HCT116 (cell line): ENCODE measurements at regions of chr12 and their contacts with region 1.

Region 1: GRCh38 chr12:96516472-96517430 is 27.4 kb downstream of the CFAP54 start:
- DNase-seq: peak; percentile 66
- ATAC-seq: peak; percentile 81
- H3K4me3 ChIP-seq: no peak overlapping the region
- H3K27ac ChIP-seq: no peak overlapping the region
- H3K4me1 ChIP-seq: peaks cover 0 to 5% of the 10 kb centered on the region in 2 experiments; a peak in 1 of 4 replicates
- H3K27me3 ChIP-seq: no peaks in the 10 kb centered on the region
- CTCF ChIP-seq: peak; percentile 29 to 80 (median 72); a peak in 5 of 6 replicates
- POLR2A ChIP-seq: no peak
- RAD21 ChIP-seq: peak; percentile 92

Region 2: DNA sequence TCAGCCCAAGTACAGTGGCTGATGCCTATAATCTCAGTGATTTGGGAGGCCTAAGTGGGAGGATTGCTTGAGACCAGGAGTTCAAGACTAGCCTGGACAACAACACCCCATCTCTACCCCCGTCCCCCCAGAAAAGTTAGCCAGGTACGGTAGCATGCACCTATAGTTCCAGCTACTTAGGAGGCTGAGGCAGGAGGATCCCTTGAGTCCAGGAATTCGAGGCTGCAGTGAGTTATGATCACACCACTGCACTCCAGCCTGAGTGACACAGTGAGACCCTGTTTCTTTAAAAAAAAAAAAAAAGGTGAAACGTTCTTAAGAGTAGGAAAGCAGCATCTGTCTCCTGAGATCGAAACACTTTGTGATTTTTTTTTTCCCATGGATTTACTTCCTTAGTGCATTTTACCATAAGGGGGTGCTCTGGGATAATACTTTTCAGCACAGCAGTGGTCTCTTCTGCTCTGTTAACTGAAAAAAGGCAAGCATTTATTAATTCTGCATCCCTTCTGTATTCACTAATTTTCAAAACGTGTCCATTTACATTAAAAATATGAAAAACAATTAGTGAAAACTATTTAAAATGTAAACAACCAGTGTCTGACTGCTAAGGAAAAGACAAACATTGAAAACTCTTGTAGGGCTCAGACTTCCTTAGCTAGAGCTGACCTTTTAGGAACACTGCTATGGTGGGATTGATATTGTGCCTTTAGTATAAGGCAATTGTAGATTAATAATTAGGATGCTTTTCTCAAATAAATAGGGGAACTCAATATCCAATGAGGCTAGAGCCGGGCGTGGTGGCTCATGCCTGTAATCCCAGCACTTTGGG is 934.3 kb before region 1 on chr12:
- CTCF ChIA-PET with region 1: interaction called, 4 read pairs
- POLR2A ChIA-PET with region 1: no interaction called
- RAD21 ChIA-PET with region 1: no interaction called
- intact Hi-C with region 1: loop called (anchors 5 kb)
- DNase-seq: peak; percentile 51
- ATAC-seq: peak; percentile 85
- H3K4me3 ChIP-seq: no peak overlapping the region
- H3K27ac ChIP-seq: no peak overlapping the region
- H3K4me1 ChIP-seq: no peaks in the 10 kb centered on the region
- H3K27me3 ChIP-seq: no peaks in the 10 kb centered on the region
- CTCF ChIP-seq: peak; percentile 43 to 72 (median 60)
- POLR2A ChIP-seq: no peak
- RAD21 ChIP-seq: peak; percentile 88

Region 3: GRCh38 chr12:95820102-95820703 is 696.5 kb before region 1 on chr12:
- CTCF ChIA-PET with region 1: no interaction called
- POLR2A ChIA-PET with region 1: no interaction called
- RAD21 ChIA-PET with region 1: no interaction called
- intact Hi-C with region 1: loop called (anchors 5 kb)
- DNase-seq: peak; percentile 41
- ATAC-seq: peak; percentile 72
- H3K4me3 ChIP-seq: no peak overlapping the region
- H3K27ac ChIP-seq: no peak overlapping the region
- H3K4me1 ChIP-seq: no peaks in the 10 kb centered on the region
- H3K27me3 ChIP-seq: no peaks in the 10 kb centered on the region
- CTCF ChIP-seq: peak; percentile 60 to 80 (median 72); a peak in 5 of 6 replicates
- POLR2A ChIP-seq: no peak
- RAD21 ChIP-seq: peak; percentile 67

Region 4: DNA sequence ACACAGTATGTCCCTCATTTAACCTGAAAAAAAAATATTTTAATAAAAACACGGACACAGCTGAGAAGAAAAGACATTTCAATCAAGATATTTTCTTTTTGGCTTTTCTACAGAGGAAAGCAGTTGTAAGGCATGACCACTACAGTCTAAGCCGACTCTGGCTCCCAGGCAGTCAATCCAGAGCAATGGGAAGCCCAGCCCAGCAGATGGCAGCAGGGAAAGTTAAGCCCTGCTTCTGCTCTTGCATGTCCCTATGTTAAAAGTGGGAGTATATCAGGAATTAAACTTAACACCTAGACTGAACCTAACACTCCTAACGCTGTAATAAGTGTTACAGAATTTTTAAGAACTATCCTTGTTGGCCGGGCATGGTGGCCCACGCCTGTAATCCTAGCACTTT is 501.1 kb before region 1 on chr12:
- CTCF ChIA-PET with region 1: interaction called, 4 read pairs
- POLR2A ChIA-PET with region 1: interaction called, 3 read pairs
- RAD21 ChIA-PET with region 1: no interaction called
- intact Hi-C with region 1: loop called (anchors 5 kb)
- DNase-seq: no peak
- ATAC-seq: peak; percentile 78
- H3K4me3 ChIP-seq: no peak overlapping the region
- H3K27ac ChIP-seq: no peak overlapping the region
- H3K4me1 ChIP-seq: no peaks in the 10 kb centered on the region
- H3K27me3 ChIP-seq: no peaks in the 10 kb centered on the region
- CTCF ChIP-seq: peak; percentile 24 to 50 (median 48); a peak in 5 of 6 replicates
- POLR2A ChIP-seq: no peak
- RAD21 ChIP-seq: peak; percentile 51; the same call in 1 of the 2 replicates

Region 5: GRCh38 chr12:96061864-96062453 is 454.8 kb before region 1 on chr12:
- CTCF ChIA-PET with region 1: interaction called, 8 read pairs
- POLR2A ChIA-PET with region 1: no interaction called
- RAD21 ChIA-PET with region 1: interaction called in 1 of 2 experiments, 3 read pairs
- intact Hi-C with region 1: loop called (anchors 1 kb)
- DNase-seq: peak; percentile 81
- ATAC-seq: peak; percentile 96
- H3K4me3 ChIP-seq: no peak overlapping the region
- H3K27ac ChIP-seq: no peak overlapping the region
- H3K4me1 ChIP-seq: no peaks in the 10 kb centered on the region
- H3K27me3 ChIP-seq: no peaks in the 10 kb centered on the region
- CTCF ChIP-seq: peak; percentile 76 to 87 (median 84)
- POLR2A ChIP-seq: no peak
- RAD21 ChIP-seq: peak; percentile 98

Region 6: DNA sequence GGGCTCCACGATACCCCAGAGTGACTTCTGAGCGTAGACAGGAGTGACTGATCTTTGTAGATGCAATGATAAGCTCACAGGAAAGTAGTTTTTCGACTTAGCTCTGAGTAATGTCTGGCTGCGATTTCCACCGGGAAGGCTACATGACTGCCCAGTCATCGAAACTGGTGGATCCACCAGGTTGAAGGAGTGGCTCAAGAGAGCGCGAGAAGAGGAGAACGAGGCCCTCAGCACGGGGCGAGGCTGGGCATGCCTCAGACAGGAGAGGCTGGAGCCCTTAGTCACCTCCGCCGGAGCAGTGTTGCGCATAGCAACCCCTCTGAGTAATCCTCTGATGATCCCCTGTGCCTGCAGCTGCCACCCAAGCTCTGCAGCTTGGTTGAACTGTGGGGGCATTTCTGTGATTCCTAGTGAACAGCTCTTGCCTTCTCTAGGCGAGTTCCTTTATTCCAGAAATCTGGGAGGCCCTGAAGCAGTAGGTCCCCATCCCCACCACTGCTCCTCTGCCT is 297.0 kb before region 1 on chr12:
- CTCF ChIA-PET with region 1: interaction called, 25 read pairs
- POLR2A ChIA-PET with region 1: no interaction called
- RAD21 ChIA-PET with region 1: interaction called, 5 to 7 read pairs
- intact Hi-C with region 1: loop called (anchors 1 kb)
- DNase-seq: peak; percentile 90
- ATAC-seq: peak; percentile 97
- H3K4me3 ChIP-seq: peak overlapping the region; percentile 33 to 46
- H3K27ac ChIP-seq: peak overlapping the region; percentile 84
- H3K4me1 ChIP-seq: peaks cover 18 to 44% of the 10 kb centered on the region in 2 experiments
- H3K27me3 ChIP-seq: no peaks in the 10 kb centered on the region
- CTCF ChIP-seq: no peak
- POLR2A ChIP-seq: no peak
- RAD21 ChIP-seq: no peak

Region 7: DNA sequence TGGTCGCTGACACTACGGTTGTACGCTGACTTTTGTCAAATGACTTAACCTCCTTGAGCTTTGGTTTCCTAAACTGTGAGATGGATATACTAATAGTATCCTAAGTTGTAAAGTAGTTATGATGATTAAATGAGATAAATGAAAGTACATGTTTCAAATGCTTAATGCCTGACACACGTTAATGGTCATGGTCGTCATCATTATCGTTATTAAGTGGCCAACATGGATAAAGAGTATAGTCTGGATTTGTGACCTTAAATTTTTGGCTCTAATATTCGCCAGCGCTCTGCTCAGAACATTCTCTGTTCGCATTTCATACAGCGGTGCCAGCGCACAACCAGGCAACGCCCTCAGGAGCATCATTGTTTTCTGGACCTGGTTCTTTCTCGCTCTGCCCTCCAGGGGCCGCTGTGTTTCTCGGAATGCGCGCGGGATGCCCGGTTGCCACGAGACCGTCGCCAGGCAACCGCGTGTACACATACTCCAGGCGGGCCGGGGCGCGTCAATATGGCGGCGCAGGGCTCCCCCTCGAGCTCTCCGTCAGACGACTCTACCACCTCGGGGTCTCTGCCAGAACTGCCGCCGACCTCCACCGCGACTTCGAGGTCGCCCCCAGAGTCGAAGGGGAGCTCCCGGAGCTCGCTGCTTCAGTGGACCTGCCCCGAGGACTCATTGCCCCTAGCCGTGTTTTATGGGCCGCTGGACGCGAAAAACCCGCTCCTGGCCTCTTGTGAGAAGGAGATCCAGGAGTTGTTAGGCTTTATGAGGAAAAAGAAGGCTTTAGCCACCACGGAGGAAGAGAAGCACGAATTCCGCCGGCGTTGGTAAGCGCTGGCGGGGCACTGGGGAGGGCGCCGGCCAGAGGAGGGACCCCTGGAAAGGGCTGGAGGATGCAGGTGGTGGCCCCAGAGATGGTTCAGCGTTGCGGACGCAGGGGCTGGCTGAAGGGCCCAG is 27.4 kb before region 1 on chr12 and contains the start of gene CFAP54:
- CTCF ChIA-PET with region 1: interaction called, 11 read pairs
- POLR2A ChIA-PET with region 1: no interaction called
- RAD21 ChIA-PET with region 1: no interaction called
- intact Hi-C with region 1: no loop called
- DNase-seq: peak; percentile 75
- ATAC-seq: peak; percentile 96
- H3K4me3 ChIP-seq: peak within 1 kb of the TSS; percentile 27 to 38
- H3K27ac ChIP-seq: no peak within 1 kb of the TSS
- H3K4me1 ChIP-seq: peaks cover 0 to 18% of the 10 kb centered on the region in 2 experiments; a peak in 2 of 4 replicates
- H3K27me3 ChIP-seq: no peaks in the 10 kb centered on the region
- CTCF ChIP-seq: peak; percentile 50 to 84 (median 84)
- POLR2A ChIP-seq: no peak
- RAD21 ChIP-seq: peak; percentile 75
- total RNA-seq, gene CFAP54: 0.25 TPM